ENCODE measurements at regions of chr2 and their contacts with region 1.

Region 1: DNA sequence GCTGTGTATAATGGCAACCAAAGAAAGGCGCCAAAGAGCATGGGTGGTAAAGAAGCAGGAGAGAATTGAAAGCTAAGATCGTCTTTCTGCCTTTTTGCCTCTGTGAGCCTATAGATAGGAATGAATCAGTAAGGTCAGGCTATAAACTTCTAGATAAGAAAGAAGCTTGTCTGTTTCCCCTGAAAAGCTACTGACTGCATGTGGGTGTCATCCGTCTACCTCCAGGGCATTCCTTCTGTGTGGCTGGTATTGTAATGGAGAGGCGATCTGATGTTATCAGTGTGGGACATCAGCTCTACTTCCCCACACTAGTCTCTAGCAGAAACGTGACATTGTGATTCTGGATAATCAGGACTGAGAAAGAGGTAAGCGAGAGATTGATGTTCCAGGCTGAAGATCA is 63.4 kb upstream of the PLA2R1 start:
- DNase-seq: no peak
- H3K4me3 ChIP-seq: no peak overlapping the region
- H3K27ac ChIP-seq: no peak overlapping the region
- H3K4me1 ChIP-seq: no peaks in the 10 kb centered on the region
- H3K27me3 ChIP-seq: no peaks in the 10 kb centered on the region
- CTCF ChIP-seq: no peak

Region 2: GRCh38 chr2:160075171-160075570 is 50.7 kb before region 1 on chr2:
- CTCF ChIA-PET with region 1: no interaction called
- POLR2A ChIA-PET with region 1: no interaction called
- intact Hi-C with region 1: no loop called
- DNase-seq: no peak
- H3K4me3 ChIP-seq: no peak overlapping the region
- H3K27ac ChIP-seq: no peak overlapping the region
- H3K4me1 ChIP-seq: peaks cover 10% of the 10 kb centered on the region
- H3K27me3 ChIP-seq: no peaks in the 10 kb centered on the region
- CTCF ChIP-seq: no peak

Region 3: DNA sequence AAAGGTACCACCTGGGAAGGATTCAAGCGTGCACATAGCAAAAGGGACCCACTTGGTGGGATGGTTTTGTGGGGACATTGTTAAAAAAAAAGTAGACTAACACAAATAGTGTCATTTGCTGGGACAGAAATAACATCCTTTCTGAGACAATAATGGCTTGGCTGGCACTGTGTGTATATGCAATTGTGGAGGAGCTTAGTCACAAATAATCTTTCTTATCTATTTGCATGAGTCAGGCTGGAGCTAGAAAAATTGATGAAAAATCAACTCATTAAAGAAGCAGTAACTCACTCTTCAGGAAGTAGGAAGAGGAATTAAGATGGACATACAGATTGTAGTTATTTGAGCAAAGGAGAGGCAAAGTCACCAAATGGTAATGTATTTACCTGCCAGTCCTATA is 103.8 kb after region 1 on chr2:
- CTCF ChIA-PET with region 1: interaction called, 10 read pairs
- POLR2A ChIA-PET with region 1: no interaction called
- intact Hi-C with region 1: no loop called
- DNase-seq: peak in 1 of 2 experiments; percentile 92
- H3K4me3 ChIP-seq: 0 out of 2 replicates have a peak overlapping the region, but pooled peaks have one; percentile 10
- H3K27ac ChIP-seq: peak overlapping the region; percentile 100
- H3K4me1 ChIP-seq: peaks cover 69% of the 10 kb centered on the region
- H3K27me3 ChIP-seq: no peaks in the 10 kb centered on the region
- CTCF ChIP-seq: no peak

Region 4: GRCh38 chr2:161134547-161135518 is 1009.0 kb after region 1 on chr2:
- CTCF ChIA-PET with region 1: no interaction called
- POLR2A ChIA-PET with region 1: interaction called, 11 read pairs
- intact Hi-C with region 1: no loop called
- DNase-seq: peak; percentile 41 to 78
- H3K4me3 ChIP-seq: peak overlapping the region; percentile 44; the same call in 1 of the 2 replicates
- H3K27ac ChIP-seq: peak overlapping the region; percentile 68
- H3K4me1 ChIP-seq: peaks cover 38% of the 10 kb centered on the region
- H3K27me3 ChIP-seq: no peaks in the 10 kb centered on the region
- CTCF ChIP-seq: no peak

Measured in PC-9 (cell line).